PC-3 (cell line): ENCODE measurements at regions of chr20 and their contacts with region 1.

Region 1: GRCh38 chr20:7285918-7286556 is 518.6 kb downstream of the BMP2 start:
- DNase-seq: peak; percentile 92
- ATAC-seq: peak; percentile 93
- H3K4me3 ChIP-seq: no peak overlapping the region
- H3K27ac ChIP-seq: no peak overlapping the region
- H3K4me1 ChIP-seq: no peaks in the 10 kb centered on the region
- H3K27me3 ChIP-seq: peaks cover 59% of the 10 kb centered on the region
- CTCF ChIP-seq: peak; percentile 95

Region 2: DNA sequence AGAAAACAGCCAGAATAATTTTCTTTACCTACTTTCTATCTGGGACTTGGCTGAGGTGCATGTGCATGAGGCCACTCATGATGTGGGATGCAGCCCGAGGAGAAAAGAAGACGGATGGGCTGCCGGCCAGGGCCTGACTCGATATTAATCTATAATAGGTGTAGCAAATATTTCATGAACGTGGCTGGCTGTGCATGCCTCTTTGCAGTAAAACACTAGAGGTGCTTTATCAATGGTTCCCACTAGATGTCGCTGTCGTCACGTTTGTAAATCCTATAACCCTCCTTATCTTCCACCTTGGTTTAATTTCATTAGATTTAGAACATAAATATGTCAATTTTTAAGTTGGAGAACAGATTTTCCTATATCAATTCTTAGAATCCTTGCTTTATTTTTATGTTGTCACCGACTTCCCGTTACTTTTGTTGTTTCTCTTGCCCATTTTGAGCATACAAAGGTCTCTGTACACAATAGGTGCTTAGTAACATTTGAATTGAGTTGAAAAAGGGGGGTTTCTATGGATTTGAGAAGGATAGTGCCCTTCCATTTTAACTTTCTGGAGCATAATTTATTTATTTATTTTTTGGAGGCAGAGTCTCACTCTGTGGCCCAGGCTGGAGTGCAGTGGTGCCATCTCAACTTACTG is 1143.6 kb before region 1 on chr20:
- CTCF ChIA-PET with region 1: no interaction called
- POLR2A ChIA-PET with region 1: no interaction called
- intact Hi-C with region 1: loop called (anchors 5 kb)
- DNase-seq: peak; percentile 89
- ATAC-seq: peak; percentile 91
- H3K4me3 ChIP-seq: peak overlapping the region; percentile 15; the same call in 1 of the 2 replicates
- H3K27ac ChIP-seq: no peak overlapping the region
- H3K4me1 ChIP-seq: no peaks in the 10 kb centered on the region
- H3K27me3 ChIP-seq: peaks cover 31% of the 10 kb centered on the region; the same call in 1 of the 2 replicates
- CTCF ChIP-seq: peak; percentile 93

Region 3: GRCh38 chr20:6767536-6768227 is 518.4 kb before region 1 on chr20 and contains the start of gene BMP2:
- CTCF ChIA-PET with region 1: no interaction called
- POLR2A ChIA-PET with region 1: no interaction called
- intact Hi-C with region 1: loop called (anchors 10 kb)
- DNase-seq: peak; percentile 28
- ATAC-seq: peak; percentile 69
- H3K4me3 ChIP-seq: peak within 1 kb of the TSS; percentile 67
- H3K27ac ChIP-seq: no peak within 1 kb of the TSS
- H3K4me1 ChIP-seq: no peaks in the 10 kb centered on the region
- H3K27me3 ChIP-seq: peaks cover 51% of the 10 kb centered on the region
- CTCF ChIP-seq: no peak
- total RNA-seq, gene BMP2: 0.40 and 0.73 TPM in 2 replicates

Region 4: DNA sequence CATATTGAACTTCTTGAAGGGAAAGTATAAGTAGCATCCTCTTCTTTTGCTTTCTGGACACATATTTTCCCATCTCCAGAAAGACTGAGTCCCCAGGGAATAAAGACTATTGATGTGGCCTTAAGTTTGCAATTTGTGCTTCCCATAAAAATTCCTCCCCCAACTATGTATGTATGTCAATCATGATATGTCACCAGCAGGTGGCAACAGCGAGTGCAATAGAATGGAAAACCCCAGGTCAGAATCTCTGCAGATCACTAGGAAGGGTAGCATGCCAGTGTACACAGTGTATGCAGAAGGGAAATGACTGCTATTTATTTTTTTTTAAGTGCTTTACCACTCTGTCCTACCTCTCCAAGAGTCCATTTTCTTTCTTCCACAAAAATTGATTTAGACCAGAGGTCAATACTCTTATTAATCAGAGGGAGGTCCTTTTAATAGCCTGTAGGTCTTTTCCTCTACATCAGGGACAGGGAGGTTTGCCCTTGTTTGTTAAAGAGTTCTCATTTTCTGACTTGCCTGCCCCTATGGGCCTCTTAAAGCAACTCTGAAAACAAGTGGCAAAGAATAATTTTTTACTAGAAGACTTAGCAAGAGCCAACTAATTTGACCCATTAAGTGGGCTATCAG is 457.1 kb before region 1 on chr20:
- CTCF ChIA-PET with region 1: no interaction called
- POLR2A ChIA-PET with region 1: no interaction called
- intact Hi-C with region 1: loop called (anchors 10 kb)
- DNase-seq: peak; percentile 85
- ATAC-seq: peak; percentile 89
- H3K4me3 ChIP-seq: no peak overlapping the region
- H3K27ac ChIP-seq: no peak overlapping the region
- H3K4me1 ChIP-seq: peaks cover 5% of the 10 kb centered on the region; the same call in 1 of the 2 replicates
- H3K27me3 ChIP-seq: peaks cover 25% of the 10 kb centered on the region
- CTCF ChIP-seq: peak; percentile 83

Region 5: GRCh38 chr20:7195704-7196103 is 90.3 kb before region 1 on chr20:
- CTCF ChIA-PET with region 1: no interaction called
- POLR2A ChIA-PET with region 1: no interaction called
- intact Hi-C with region 1: no loop called
- DNase-seq: peak; percentile 79
- ATAC-seq: no peak
- H3K4me3 ChIP-seq: no peak overlapping the region
- H3K27ac ChIP-seq: no peak overlapping the region
- H3K4me1 ChIP-seq: peaks cover 17% of the 10 kb centered on the region; the same call in 1 of the 2 replicates
- H3K27me3 ChIP-seq: peaks cover 13% of the 10 kb centered on the region
- CTCF ChIP-seq: no peak

Region 6: DNA sequence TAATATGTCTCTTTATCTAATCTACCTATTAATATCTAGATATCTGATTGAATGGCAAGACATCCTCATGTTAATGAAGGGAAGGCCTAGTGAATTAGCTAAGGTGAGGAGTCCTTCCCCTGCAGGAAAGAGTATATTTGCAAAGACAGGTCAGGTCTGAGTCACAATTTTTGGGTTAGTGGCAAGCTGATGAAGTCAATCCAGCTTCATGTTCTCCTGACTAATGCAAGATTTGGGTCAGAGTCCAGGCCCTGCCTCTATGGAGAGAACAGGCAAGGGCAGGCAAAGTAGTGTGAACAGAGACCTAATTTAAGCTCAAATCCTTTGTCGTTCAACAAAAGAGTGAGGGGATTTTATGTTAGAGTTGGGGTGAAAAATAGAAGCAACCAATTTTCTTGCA is 21.9 kb before region 1 on chr20:
- CTCF ChIA-PET with region 1: no interaction called
- POLR2A ChIA-PET with region 1: no interaction called
- intact Hi-C with region 1: no loop called
- DNase-seq: peak; percentile 71
- ATAC-seq: no peak
- H3K4me3 ChIP-seq: no peak overlapping the region
- H3K27ac ChIP-seq: no peak overlapping the region
- H3K4me1 ChIP-seq: peaks cover 9% of the 10 kb centered on the region; the same call in 1 of the 2 replicates
- H3K27me3 ChIP-seq: peaks cover 3% of the 10 kb centered on the region; the same call in 1 of the 2 replicates
- CTCF ChIP-seq: no peak

Region 7: GRCh38 chr20:7935027-7935551 is 649.1 kb after region 1 on chr20:
- CTCF ChIA-PET with region 1: interaction called, 10 read pairs
- POLR2A ChIA-PET with region 1: no interaction called
- intact Hi-C with region 1: no loop called
- DNase-seq: no peak
- ATAC-seq: no peak
- H3K4me3 ChIP-seq: no peak overlapping the region
- H3K27ac ChIP-seq: no peak overlapping the region
- H3K4me1 ChIP-seq: peaks cover 7% of the 10 kb centered on the region
- H3K27me3 ChIP-seq: peaks cover 3% of the 10 kb centered on the region; the same call in 1 of the 2 replicates
- CTCF ChIP-seq: no peak

Region 8: GRCh38 chr20:8032499-8032898 is 746.5 kb after region 1 on chr20:
- CTCF ChIA-PET with region 1: no interaction called
- POLR2A ChIA-PET with region 1: no interaction called
- intact Hi-C with region 1: no loop called
- DNase-seq: no peak
- ATAC-seq: no peak
- H3K4me3 ChIP-seq: no peak overlapping the region
- H3K27ac ChIP-seq: no peak overlapping the region
- H3K4me1 ChIP-seq: no peaks in the 10 kb centered on the region
- H3K27me3 ChIP-seq: peaks cover 60% of the 10 kb centered on the region
- CTCF ChIP-seq: no peak